Calu3 (cell line): ENCODE measurements at regions of chr1 and their contacts with region 1.

Region 1: DNA sequence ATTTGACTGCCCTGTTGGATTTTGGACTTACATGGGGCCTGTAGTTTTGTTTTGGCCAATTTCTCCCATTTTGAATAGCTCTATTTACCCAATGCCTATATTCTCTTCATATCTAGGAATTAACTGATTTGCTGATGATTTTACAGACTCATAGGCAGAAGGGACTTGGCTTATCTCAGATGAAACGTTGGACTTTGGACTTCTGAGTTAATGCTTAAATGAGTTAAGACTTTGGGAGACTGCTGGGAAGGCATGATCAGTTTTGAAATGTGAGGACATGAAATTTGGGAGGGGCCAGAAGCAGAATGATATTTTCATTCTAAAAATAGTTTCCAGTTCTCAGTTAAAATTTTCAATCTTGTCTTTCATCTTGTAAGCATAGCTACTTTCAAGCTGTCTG is 222.3 kb downstream of the COP1 start:
- DNase-seq: peak; percentile 10
- H3K4me3 Mint-ChIP-seq: no peak overlapping the region
- H3K27ac Mint-ChIP-seq: peak overlapping the region; percentile 65
- H3K4me1 Mint-ChIP-seq: peaks cover 14% of the 10 kb centered on the region
- H3K27me3 Mint-ChIP-seq: no peaks in the 10 kb centered on the region
- CTCF ChIP-seq: no peak

Region 2: DNA sequence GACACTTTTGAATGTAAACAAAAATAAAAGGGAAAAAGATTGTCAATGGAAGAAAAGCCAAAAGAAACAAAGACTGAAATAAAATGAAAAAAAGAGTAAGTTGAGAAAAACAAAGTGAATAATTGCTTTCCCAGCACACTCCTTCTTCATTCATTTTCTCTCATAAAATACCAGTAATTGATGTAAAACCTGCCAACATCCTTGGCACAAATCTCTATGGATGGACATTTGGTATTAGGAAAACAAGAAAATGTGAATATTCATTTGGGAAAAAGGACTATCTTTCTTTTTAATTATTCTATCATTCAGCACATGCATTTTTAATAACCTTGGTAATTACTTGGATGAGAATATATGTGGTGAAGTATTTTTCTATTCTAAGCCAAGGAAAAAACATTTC is 37.0 kb before region 1 on chr1:
- CTCF ChIA-PET with region 1: no interaction called
- intact Hi-C with region 1: no loop called
- DNase-seq: no peak
- H3K4me3 Mint-ChIP-seq: no peak overlapping the region
- H3K27ac Mint-ChIP-seq: no peak overlapping the region
- H3K4me1 Mint-ChIP-seq: no peaks in the 10 kb centered on the region
- H3K27me3 Mint-ChIP-seq: no peaks in the 10 kb centered on the region
- CTCF ChIP-seq: no peak

Region 3: DNA sequence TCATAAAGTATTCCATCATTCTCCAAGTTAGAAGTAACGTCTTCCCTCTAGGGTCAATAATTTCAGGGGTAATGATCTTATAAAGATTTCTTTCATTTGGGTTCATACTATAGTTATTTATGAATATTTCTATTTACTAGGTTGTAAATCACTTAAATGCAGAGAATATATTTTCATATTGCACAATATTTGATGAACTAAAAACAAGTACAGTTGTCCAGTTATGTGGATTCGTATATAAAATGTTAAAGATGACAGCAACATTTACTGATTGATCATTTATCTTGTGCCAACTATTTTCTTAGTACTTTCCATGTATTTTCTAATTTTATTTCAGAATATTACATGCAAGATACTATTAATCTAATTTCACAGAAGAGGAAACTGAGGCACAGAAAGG is 21.1 kb before region 1 on chr1:
- CTCF ChIA-PET with region 1: no interaction called
- intact Hi-C with region 1: loop called (anchors 2 kb)
- DNase-seq: no peak
- H3K4me3 Mint-ChIP-seq: no peak overlapping the region
- H3K27ac Mint-ChIP-seq: no peak overlapping the region
- H3K4me1 Mint-ChIP-seq: no peaks in the 10 kb centered on the region
- H3K27me3 Mint-ChIP-seq: no peaks in the 10 kb centered on the region
- CTCF ChIP-seq: no peak

Region 4: GRCh38 chr1:176000258-176000657 is 15.4 kb after region 1 on chr1:
- CTCF ChIA-PET with region 1: no interaction called
- intact Hi-C with region 1: no loop called
- DNase-seq: no peak
- H3K4me3 Mint-ChIP-seq: no peak overlapping the region
- H3K27ac Mint-ChIP-seq: no peak overlapping the region
- H3K4me1 Mint-ChIP-seq: no peaks in the 10 kb centered on the region
- H3K27me3 Mint-ChIP-seq: no peaks in the 10 kb centered on the region
- CTCF ChIP-seq: no peak

Region 5: GRCh38 chr1:176046926-176047325 is 62.1 kb after region 1 on chr1:
- CTCF ChIA-PET with region 1: no interaction called
- intact Hi-C with region 1: no loop called
- DNase-seq: no peak
- H3K4me3 Mint-ChIP-seq: no peak overlapping the region
- H3K27ac Mint-ChIP-seq: no peak overlapping the region
- H3K4me1 Mint-ChIP-seq: no peaks in the 10 kb centered on the region
- H3K27me3 Mint-ChIP-seq: no peaks in the 10 kb centered on the region
- CTCF ChIP-seq: no peak